ENCODE measurements at regions of chr5 and their contacts with region 1.

Region 1: GRCh38 chr5:127564002-127564769 is 46.7 kb downstream of the PRRC1 start:
- DNase-seq: no peak
- ATAC-seq: no peak

Region 2: DNA sequence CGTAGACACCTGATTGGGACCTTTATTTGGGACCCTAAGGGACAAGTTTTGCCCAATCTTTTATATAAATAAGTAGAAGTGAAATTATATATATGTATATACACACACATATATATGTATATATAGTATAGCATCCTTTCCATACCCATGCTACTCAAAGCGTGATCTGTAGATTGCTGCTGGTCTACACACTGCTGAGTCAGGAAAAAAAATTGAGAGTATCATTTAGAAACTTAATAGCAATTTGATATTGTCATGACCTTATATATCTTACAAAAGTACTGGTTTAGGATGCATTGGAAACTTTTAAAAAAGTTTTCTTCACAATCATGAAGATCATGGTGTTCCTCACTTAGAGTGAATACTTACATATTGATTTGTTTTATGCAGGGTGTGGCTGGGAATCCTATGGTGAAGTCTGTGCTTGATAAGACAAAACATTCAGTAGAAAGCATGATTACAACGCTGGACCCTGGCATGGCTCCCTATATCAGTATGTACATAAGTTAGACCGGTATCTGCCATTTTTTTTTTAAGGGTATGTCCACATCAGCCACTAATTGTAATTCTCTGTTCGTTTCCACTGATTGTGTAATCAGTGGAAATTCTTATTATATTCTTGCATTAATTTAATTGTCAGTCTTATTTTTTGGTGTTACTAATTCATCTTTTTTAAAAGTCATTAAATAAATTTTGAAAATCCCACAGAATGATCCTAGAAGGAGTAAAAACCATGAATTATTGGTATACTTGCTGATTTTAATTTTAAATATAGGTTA is 34.1 kb before region 1 on chr5:
- intact Hi-C with region 1: no loop called
- DNase-seq: no peak
- ATAC-seq: no peak

Region 3: DNA sequence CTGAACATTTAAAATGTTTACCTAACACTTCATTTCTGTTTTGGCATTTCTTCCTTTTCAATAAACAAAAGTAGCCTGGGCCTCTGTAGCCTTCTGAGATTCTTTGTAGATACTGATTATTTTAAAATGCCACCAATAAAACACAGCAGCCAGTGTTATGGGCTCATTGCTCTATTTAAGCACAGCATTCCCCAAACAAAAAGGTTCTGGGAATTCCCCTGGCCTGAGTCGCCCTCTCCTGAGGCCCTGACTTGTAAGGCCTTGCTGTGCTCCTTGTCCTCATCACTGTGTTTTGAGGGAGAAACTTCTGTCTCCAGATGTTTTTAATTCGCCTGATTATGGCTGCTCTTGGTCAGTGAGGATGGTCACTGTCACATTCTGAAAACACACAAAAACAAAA is 51.7 kb after region 1 on chr5:
- intact Hi-C with region 1: no loop called
- DNase-seq: no peak
- ATAC-seq: no peak

Region 4: DNA sequence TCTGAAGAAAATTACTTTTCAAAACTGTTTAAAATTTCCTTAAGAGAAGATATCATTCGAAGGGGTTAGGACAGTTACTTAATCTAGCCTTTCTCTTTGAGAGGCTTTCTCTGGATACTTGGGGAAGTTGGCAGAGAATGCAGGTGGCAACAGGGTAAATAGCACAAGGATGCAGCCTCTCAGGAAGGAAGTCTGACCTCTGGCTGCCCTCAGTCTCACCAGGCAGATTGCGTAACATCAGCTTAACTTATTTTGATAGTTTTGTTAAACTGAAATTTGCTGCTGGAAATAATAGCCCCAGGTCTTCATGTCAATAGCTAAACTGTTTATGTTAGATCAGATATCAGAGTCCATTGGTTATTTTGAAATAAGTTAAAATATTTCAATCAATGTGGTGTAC is 159.4 kb after region 1 on chr5:
- intact Hi-C with region 1: loop called (anchors 10 kb)
- DNase-seq: no peak
- ATAC-seq: peak; percentile 84

Region 5: GRCh38 chr5:127757576-127757975 is 193.4 kb after region 1 on chr5:
- intact Hi-C with region 1: loop called (anchors 10 kb)
- DNase-seq: no peak
- ATAC-seq: no peak

Region 6: DNA sequence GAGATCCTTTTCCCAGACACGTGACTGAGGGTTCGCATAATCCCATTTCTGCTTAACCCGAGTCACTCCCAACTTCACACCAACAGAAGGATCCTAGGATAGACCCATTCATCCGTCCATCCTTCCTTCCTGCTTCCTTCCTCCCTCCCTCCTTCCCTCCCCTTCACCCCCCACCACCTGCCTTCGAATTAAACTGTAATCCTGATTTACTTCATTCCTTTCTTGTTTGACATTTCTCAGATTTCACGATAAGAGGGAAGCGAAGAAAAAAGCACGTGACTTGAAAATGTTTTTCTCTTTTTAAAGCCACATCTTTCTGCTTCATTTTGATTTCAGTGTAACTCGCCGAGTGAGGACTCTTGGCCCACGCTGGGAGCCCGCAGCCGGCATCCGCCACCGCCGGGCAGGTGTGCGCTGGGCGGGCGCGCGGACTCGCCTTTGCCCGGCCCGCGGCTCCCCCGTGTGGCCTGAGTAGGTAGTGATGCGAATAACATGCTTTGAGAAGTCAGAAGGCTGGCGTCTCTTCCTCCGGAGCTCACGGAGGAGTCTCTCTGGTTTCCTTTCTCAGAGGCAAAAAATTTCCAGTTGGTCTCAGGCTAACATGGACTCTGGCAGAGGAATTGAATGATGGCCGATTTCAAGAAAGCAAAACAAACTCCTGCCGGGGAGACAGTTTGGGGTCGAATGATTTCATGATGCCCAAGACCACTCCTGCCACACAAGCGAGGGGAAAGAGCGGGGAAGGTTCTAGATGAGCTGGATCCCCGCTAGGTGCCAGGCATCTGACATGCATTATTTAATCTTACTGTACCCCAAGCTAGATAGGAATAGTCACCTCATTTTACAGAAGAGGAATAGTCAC is 637.1 kb after region 1 on chr5:
- intact Hi-C with region 1: loop called (anchors 1 kb)
- DNase-seq: peak; percentile 90
- ATAC-seq: peak; percentile 71